HCT116 (cell line): ENCODE measurements at regions of chr1 and their contacts with region 1.

Region 1: DNA sequence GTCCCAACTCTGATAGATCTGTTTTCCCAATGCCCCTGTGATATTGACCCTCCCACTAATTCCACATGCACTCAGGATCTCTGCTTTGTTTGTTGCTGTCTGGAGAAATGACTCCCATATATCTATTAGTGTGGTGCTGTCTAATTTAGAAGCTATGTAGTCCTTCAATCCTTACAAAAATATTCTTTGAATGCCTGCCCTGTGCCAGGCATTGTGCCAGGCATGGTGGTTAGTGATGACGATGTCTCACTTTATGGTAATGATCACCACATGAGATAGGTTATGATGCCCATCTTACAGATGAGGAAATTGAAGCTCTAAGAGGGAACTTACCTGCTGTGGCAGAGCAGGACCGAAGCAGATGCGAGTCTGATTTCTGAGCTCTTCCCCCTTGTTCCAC is 12.9 kb downstream of the MYOG start:
- DNase-seq: no peak
- ATAC-seq: no peak
- H3K4me3 ChIP-seq: no peak overlapping the region
- H3K27ac ChIP-seq: no peak overlapping the region
- H3K4me1 ChIP-seq: no peaks in the 10 kb centered on the region
- H3K27me3 ChIP-seq: no peaks in the 10 kb centered on the region
- CTCF ChIP-seq: no peak
- POLR2A ChIP-seq: no peak
- RAD21 ChIP-seq: no peak

Region 2: GRCh38 chr1:203017692-203018091 is 55.2 kb before region 1 on chr1:
- CTCF ChIA-PET with region 1: no interaction called
- POLR2A ChIA-PET with region 1: no interaction called
- RAD21 ChIA-PET with region 1: no interaction called
- intact Hi-C with region 1: no loop called
- DNase-seq: no peak
- ATAC-seq: no peak
- H3K4me3 ChIP-seq: no peak overlapping the region
- H3K27ac ChIP-seq: no peak overlapping the region
- H3K4me1 ChIP-seq: no peaks in the 10 kb centered on the region
- H3K27me3 ChIP-seq: no peaks in the 10 kb centered on the region
- CTCF ChIP-seq: no peak
- POLR2A ChIP-seq: no peak
- RAD21 ChIP-seq: no peak

Region 3: GRCh38 chr1:203084588-203085502 is 11.9 kb after region 1 on chr1:
- CTCF ChIA-PET with region 1: interaction called, 14 read pairs
- POLR2A ChIA-PET with region 1: no interaction called
- RAD21 ChIA-PET with region 1: no interaction called
- intact Hi-C with region 1: no loop called
- DNase-seq: no peak
- ATAC-seq: peak; percentile 88
- H3K4me3 ChIP-seq: no peak overlapping the region
- H3K27ac ChIP-seq: no peak overlapping the region
- H3K4me1 ChIP-seq: no peaks in the 10 kb centered on the region
- H3K27me3 ChIP-seq: no peaks in the 10 kb centered on the region
- CTCF ChIP-seq: peak; percentile 33 to 91 (median 89); a peak in 5 of 6 replicates
- POLR2A ChIP-seq: no peak
- RAD21 ChIP-seq: peak; percentile 63

Region 4: GRCh38 chr1:203173566-203173965 is 100.7 kb after region 1 on chr1:
- CTCF ChIA-PET with region 1: no interaction called
- POLR2A ChIA-PET with region 1: no interaction called
- RAD21 ChIA-PET with region 1: no interaction called
- intact Hi-C with region 1: no loop called
- DNase-seq: no peak
- ATAC-seq: no peak
- H3K4me3 ChIP-seq: no peak overlapping the region
- H3K27ac ChIP-seq: no peak overlapping the region
- H3K4me1 ChIP-seq: peaks cover 29 to 77% of the 10 kb centered on the region in 2 experiments
- H3K27me3 ChIP-seq: no peaks in the 10 kb centered on the region
- CTCF ChIP-seq: no peak
- POLR2A ChIP-seq: no peak
- RAD21 ChIP-seq: no peak